K562 (cell line): ENCODE measurements at regions of chr11 and their contacts with region 1.

Region 1: GRCh38 chr11:66727282-66727882 is 1.6 kb downstream of the SPTBN2 start:
- DNase-seq: peak; percentile 60 to 81 (median 74)
- ATAC-seq: peak; percentile 72
- H3K4me3 ChIP-seq: peak overlapping the region; percentile 51
- H3K27ac ChIP-seq: peak overlapping the region; percentile 75
- H3K4me1 ChIP-seq: peaks cover 24 to 34% of the 10 kb centered on the region in 2 experiments; a peak in 4 of 5 replicates
- H3K27me3 ChIP-seq: 0 out of 5 replicates have a peak, but pooled peaks cover 0 to 3% of the 10 kb centered on the region in 2 experiments
- CTCF ChIP-seq: no peak
- EP300 ChIP-seq: no peak
- POLR2A ChIP-seq: peak; percentile 70
- RAD21 ChIP-seq: no peak

Region 2: DNA sequence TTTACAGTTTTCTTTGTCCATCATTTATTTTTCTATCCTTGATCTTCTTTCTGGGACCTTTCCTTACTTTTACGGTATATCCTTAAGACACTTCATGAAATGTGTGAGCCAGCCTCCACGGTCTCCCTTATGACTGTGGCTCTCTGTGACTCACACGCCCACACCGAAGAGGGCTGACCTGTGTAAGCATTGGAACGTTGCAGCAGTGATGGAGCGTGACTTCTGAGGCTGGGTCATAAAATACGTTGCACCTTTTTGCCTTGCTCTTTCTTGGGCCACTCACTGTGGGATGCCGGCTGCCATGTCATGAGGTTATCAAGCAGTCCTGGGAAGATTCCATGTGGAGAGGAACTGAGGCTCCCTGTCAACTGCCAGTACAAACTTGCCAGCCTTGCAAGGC is 555.2 kb before region 1 on chr11:
- CTCF ChIA-PET with region 1: no interaction called
- POLR2A ChIA-PET with region 1: no interaction called
- in situ Hi-C with region 1: no loop called
- intact Hi-C with region 1: no loop called
- DNase-seq: peak in 1 of 4 experiments; percentile 37
- ATAC-seq: peak; percentile 44; the same call in 1 of the 3 replicates
- H3K4me3 ChIP-seq: no peak overlapping the region
- H3K27ac ChIP-seq: no peak overlapping the region
- H3K4me1 ChIP-seq: peaks cover 0 to 5% of the 10 kb centered on the region in 2 experiments; a peak in 3 of 5 replicates
- H3K27me3 ChIP-seq: no peaks in the 10 kb centered on the region
- CTCF ChIP-seq: no peak
- EP300 ChIP-seq: no peak
- POLR2A ChIP-seq: no peak
- RAD21 ChIP-seq: no peak

Region 3: DNA sequence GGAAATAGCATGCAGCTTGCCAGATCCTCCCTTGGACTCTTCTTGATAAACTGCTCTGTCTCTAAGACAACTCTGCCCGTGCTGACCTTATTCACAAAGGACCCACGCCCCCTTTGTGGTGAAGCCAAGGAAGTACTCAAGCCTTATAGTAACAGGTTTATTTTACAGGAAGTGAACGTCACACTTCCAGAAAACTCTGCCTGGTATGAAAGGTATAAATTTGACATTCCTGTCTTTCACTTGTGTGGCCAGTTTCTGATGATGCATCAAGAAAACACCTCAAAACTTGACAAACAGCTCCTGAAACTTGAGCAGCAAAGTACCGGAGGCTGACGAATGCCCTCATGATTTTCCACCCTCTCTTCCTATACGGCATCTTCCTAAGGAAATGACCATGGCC is 273.1 kb before region 1 on chr11:
- CTCF ChIA-PET with region 1: no interaction called
- POLR2A ChIA-PET with region 1: no interaction called
- in situ Hi-C with region 1: no loop called
- intact Hi-C with region 1: no loop called
- DNase-seq: no peak
- ATAC-seq: no peak
- H3K4me3 ChIP-seq: no peak overlapping the region
- H3K27ac ChIP-seq: no peak overlapping the region
- H3K4me1 ChIP-seq: peaks cover 0 to 4% of the 10 kb centered on the region in 2 experiments; a peak in 1 of 5 replicates
- H3K27me3 ChIP-seq: peaks cover 5 to 35% of the 10 kb centered on the region in 2 experiments; a peak in 4 of 5 replicates
- CTCF ChIP-seq: no peak
- EP300 ChIP-seq: no peak
- POLR2A ChIP-seq: no peak
- RAD21 ChIP-seq: no peak

Region 4: GRCh38 chr11:66713746-66714480 is 13.5 kb before region 1 on chr11:
- CTCF ChIA-PET with region 1: no interaction called
- POLR2A ChIA-PET with region 1: interaction called, 15 read pairs
- in situ Hi-C with region 1: no loop called
- intact Hi-C with region 1: no loop called
- DNase-seq: no peak
- ATAC-seq: no peak
- H3K4me3 ChIP-seq: no peak overlapping the region
- H3K27ac ChIP-seq: no peak overlapping the region
- H3K4me1 ChIP-seq: peaks cover 0 to 16% of the 10 kb centered on the region in 2 experiments; a peak in 3 of 5 replicates
- H3K27me3 ChIP-seq: no peaks in the 10 kb centered on the region
- CTCF ChIP-seq: no peak
- EP300 ChIP-seq: no peak
- POLR2A ChIP-seq: no peak
- RAD21 ChIP-seq: no peak

Region 5: DNA sequence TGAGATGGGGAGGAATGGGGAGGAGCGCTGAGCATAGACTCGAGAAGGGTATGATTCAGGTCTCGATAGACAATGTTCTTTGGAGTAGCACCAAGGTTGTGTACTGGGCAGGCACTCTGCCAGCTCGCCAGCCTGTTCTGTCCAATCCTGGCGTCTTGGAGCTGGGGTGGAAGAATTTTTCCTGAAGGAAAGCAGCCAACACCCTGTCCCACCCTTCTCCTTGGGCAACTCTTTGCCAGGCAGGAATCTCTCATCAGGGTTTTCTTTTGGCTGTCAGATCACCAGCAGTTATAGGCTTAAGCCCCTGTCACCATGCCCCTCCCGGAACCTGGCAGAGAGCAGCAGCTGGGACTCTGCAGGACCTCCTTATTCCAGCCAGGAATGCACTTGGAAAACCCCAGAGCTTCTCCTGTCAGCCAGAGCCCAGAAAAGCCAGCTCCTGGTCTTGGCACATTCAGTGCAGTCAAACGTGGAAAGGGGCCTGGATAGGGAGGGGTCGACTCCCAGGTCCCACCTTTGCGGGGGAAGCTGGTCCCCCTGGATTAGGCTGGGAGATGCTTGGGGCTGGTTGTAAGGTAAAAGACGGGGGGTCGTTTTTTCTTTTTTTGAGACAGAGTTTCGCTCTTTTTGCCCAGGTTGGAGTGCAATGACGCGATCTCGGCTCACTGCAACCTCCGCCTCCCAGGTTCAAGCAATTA is 16.0 kb after region 1 on chr11:
- CTCF ChIA-PET with region 1: no interaction called
- POLR2A ChIA-PET with region 1: interaction called, 10 read pairs
- in situ Hi-C with region 1: no loop called
- intact Hi-C with region 1: no loop called
- DNase-seq: no peak
- ATAC-seq: no peak
- H3K4me3 ChIP-seq: peak overlapping the region; percentile 82; the same call in 1 of the 2 replicates
- H3K27ac ChIP-seq: no peak overlapping the region
- H3K4me1 ChIP-seq: peaks cover 9 to 31% of the 10 kb centered on the region in 2 experiments; a peak in 4 of 5 replicates
- H3K27me3 ChIP-seq: no peaks in the 10 kb centered on the region
- CTCF ChIP-seq: no peak
- EP300 ChIP-seq: no peak
- POLR2A ChIP-seq: no peak
- RAD21 ChIP-seq: no peak